ENCODE measurements at regions of chr10 and their contacts with region 1.

Region 1: GRCh38 chr10:92999191-92999590 is 61.4 kb upstream of the CYP26C1 start:
- DNase-seq: no peak
- H3K4me3 ChIP-seq: no peak overlapping the region
- H3K27ac ChIP-seq: no peak overlapping the region
- H3K27me3 ChIP-seq: no peaks in the 10 kb centered on the region
- CTCF ChIP-seq: no peak

Region 2: DNA sequence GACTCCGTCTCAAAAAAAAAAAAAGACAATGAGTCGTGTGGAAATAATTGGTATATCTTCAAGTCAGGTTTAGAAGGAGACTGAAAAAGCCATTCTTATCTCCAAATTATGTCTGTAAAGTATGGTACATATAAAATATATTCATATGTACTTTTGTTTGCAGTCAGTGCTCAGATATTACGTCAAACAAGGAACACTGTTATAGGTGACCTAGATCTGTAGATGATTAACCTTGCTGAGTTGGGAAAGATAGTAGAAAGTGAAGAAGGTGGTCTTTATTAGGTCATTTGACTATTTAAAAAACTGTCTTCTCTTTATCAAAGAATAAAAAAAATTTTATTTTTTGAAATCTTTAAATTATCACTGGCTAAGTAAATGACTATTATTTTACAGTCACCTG is 16.5 kb after region 1 on chr10:
- CTCF ChIA-PET with region 1: interaction called, 11 read pairs
- POLR2A ChIA-PET with region 1: no interaction called
- DNase-seq: no peak
- H3K4me3 ChIP-seq: no peak overlapping the region
- H3K27ac ChIP-seq: no peak overlapping the region
- H3K27me3 ChIP-seq: no peaks in the 10 kb centered on the region
- CTCF ChIP-seq: no peak